ENCODE measurements at regions of chr21 and their contacts with region 1.

Region 1: DNA sequence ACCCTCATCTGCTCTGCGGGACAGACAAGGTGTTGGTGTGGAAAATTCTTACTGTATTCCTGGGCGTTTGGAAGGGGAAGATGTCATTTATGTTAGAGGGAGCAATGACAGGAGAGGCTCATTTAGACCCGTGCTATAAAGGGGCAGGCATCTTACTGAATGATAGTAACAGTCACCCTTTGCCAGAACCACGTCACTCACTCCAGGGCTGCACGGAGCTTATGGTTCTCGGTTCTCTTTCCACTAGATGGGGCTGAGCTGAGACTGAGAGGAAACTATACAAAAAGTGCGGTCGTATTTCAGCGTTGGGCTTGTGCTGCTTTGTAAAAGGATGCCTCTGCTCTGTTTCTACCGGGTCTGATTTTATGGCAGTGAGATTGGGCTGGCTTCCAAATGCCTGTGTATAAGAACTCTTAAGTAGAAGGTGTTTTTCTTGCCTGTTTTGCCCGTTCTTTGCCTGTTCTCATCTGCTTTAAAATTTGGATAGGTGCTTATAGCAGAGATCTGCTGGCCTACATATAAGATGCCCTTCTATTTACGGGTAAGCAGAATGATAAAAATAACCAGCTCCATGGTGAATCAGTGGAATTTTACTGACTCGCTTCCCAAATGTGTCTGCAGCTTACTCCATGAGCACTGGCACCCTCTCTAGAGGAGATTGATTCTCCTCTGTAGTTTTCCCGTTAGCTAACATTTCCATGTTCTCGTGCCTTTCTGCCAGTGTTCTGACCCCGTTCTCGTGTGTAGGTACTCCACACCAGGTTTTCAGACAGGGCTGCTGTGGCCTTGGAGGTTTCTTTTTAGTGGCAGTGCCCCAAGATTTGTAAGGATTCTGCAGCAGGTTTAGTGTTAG is 55.9 kb downstream of the MRPS6 start:
- DNase-seq: peak; percentile 17 to 84 (median 64)
- ATAC-seq: peak; percentile 92
- H3K4me3 ChIP-seq: peak overlapping the region in 1 of 2 experiments; percentile 25
- H3K4me3 Mint-ChIP-seq: peak overlapping the region; percentile 58
- H3K27ac ChIP-seq: peak overlapping the region; percentile 28 to 48
- H3K27ac Mint-ChIP-seq: peak overlapping the region; percentile 88
- H3K4me1 ChIP-seq: peaks cover 69% of the 10 kb centered on the region
- H3K4me1 Mint-ChIP-seq: peaks cover 93% of the 10 kb centered on the region
- H3K27me3 ChIP-seq: no peaks in the 10 kb centered on the region
- H3K27me3 Mint-ChIP-seq: no peaks in the 10 kb centered on the region
- CTCF ChIP-seq: peak; percentile 47

Region 2: DNA sequence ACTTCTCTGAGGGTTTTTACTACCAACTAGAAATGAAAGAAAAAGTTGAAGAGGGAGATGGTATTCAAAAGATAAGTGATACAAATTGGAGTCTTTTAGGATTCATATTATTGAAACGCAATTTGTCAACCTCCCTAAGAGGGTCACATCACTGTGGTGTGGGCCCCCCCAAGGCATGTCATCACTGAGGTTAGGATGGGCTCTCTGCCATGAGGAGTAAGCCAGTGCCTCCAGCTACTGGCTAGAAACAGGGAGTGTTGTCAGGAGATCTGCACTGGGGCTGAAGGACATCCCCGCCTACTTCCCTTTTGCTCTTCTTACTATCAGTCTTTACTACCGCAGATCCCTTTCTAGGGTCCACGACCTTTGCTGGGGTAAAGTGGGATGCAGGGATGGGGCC is 461.1 kb before region 1 on chr21:
- CTCF ChIA-PET with region 1: no interaction called
- POLR2A ChIA-PET with region 1: no interaction called
- intact Hi-C with region 1: no loop called
- DNase-seq: no peak
- ATAC-seq: no peak
- H3K4me3 ChIP-seq: no peak overlapping the region
- H3K4me3 Mint-ChIP-seq: no peak overlapping the region
- H3K27ac ChIP-seq: no peak overlapping the region
- H3K27ac Mint-ChIP-seq: no peak overlapping the region
- H3K4me1 ChIP-seq: no peaks in the 10 kb centered on the region
- H3K4me1 Mint-ChIP-seq: no peaks in the 10 kb centered on the region
- H3K27me3 ChIP-seq: no peaks in the 10 kb centered on the region
- H3K27me3 Mint-ChIP-seq: peaks cover 4% of the 10 kb centered on the region
- CTCF ChIP-seq: no peak

Region 3: DNA sequence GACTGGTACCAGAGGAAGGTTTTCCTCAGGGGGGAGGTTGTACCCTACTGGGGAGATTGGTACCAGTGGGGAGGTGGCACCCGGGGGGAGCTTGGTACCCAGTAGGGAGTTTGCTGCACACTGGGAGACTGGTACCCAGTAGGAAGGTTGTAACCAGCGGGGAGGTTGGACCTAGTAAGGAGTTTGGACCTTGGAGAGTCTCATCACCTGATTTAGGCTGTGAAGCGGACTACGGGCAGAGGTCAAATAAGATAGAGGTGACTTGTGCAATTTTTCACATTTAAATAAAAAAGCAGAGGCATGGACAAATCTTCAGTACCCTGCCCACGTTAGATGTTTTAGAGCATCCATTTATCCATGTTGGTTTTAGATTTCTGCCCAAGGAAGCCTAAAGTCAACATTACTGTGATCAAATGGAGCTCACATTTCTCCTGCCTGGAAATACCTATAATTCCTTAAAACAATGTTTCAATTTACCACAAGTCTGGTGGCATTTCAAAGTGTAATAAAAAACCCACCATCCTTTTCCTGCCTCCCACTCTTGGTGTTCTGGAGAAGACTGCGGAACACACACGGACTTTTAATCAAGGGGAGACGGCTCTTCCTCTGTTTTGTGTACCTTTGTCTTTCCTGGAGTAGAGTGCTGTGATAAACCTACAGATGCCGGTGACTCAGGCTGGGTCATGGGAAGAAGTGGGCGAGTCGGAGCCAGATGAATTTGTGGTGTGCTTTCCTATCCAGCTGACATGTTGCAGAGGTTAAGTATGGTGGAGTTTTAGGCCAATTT is 92.1 kb before region 1 on chr21:
- CTCF ChIA-PET with region 1: no interaction called
- POLR2A ChIA-PET with region 1: no interaction called
- intact Hi-C with region 1: no loop called
- DNase-seq: no peak
- ATAC-seq: no peak
- H3K4me3 ChIP-seq: no peak overlapping the region
- H3K4me3 Mint-ChIP-seq: no peak overlapping the region
- H3K27ac ChIP-seq: no peak overlapping the region
- H3K27ac Mint-ChIP-seq: no peak overlapping the region
- H3K4me1 ChIP-seq: no peaks in the 10 kb centered on the region
- H3K4me1 Mint-ChIP-seq: no peaks in the 10 kb centered on the region
- H3K27me3 ChIP-seq: no peaks in the 10 kb centered on the region
- H3K27me3 Mint-ChIP-seq: no peaks in the 10 kb centered on the region
- CTCF ChIP-seq: no peak

Region 4: DNA sequence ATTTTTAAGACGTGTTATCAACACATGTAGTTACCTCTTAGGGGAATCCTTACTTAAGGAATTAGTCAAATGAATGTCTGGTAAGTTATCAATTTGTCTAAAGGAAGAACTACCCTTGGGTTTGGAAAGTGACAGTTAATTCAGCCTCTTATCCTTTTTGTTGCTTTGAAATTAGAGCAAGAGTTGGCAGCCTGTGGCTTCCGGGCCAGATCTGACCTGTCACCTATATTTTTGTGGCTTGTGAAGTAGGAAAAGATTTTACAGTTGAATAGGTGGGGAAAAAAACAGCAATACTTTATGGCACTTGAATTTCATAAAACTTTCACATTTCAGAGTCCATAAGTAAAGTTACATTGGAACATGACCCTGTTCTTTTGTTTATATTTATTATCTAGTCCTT is 50.4 kb before region 1 on chr21:
- CTCF ChIA-PET with region 1: interaction called, 3 read pairs
- POLR2A ChIA-PET with region 1: no interaction called
- intact Hi-C with region 1: loop called (anchors 2 to 5 kb)
- DNase-seq: peak in 5 of 9 experiments; percentile 22 to 56 (median 34)
- ATAC-seq: no peak
- H3K4me3 ChIP-seq: no peak overlapping the region
- H3K4me3 Mint-ChIP-seq: peak overlapping the region; percentile 49
- H3K27ac ChIP-seq: peak overlapping the region in 1 of 2 experiments; percentile 17
- H3K27ac Mint-ChIP-seq: peak overlapping the region; percentile 46
- H3K4me1 ChIP-seq: peaks cover 85% of the 10 kb centered on the region
- H3K4me1 Mint-ChIP-seq: peaks cover 95% of the 10 kb centered on the region
- H3K27me3 ChIP-seq: no peaks in the 10 kb centered on the region
- H3K27me3 Mint-ChIP-seq: no peaks in the 10 kb centered on the region
- CTCF ChIP-seq: no peak

Region 5: DNA sequence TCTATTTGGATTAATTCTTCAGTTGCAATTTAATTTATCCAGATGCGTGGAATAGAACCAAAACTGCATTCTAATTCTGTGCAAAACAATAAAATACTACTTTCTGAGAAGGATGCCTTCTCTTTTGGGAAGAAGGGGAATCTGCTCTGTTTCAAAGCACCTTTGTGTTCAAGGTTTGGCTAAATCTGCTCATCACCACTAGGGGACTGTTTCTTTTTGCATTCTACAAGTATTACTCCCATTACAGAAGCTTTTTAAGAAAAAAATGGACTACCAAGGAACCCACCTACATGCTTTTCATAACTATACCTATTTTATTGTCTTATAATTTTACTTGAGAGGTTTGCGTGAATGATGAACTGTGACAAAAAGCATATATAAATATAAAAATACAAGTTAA is 37.7 kb before region 1 on chr21:
- CTCF ChIA-PET with region 1: interaction called, 5 read pairs
- POLR2A ChIA-PET with region 1: no interaction called
- intact Hi-C with region 1: loop called in 1 of 2 experiments (anchors 2 kb)
- DNase-seq: peak in 2 of 9 experiments; percentile 17 to 26
- ATAC-seq: no peak
- H3K4me3 ChIP-seq: no peak overlapping the region
- H3K4me3 Mint-ChIP-seq: no peak overlapping the region
- H3K27ac ChIP-seq: no peak overlapping the region
- H3K27ac Mint-ChIP-seq: peak overlapping the region; percentile 4
- H3K4me1 ChIP-seq: peaks cover 61% of the 10 kb centered on the region
- H3K4me1 Mint-ChIP-seq: peaks cover 63% of the 10 kb centered on the region
- H3K27me3 ChIP-seq: no peaks in the 10 kb centered on the region
- H3K27me3 Mint-ChIP-seq: no peaks in the 10 kb centered on the region
- CTCF ChIP-seq: peak; percentile 47

Region 6: GRCh38 chr21:34202553-34203372 is 73.5 kb after region 1 on chr21:
- CTCF ChIA-PET with region 1: interaction called, 5 read pairs
- POLR2A ChIA-PET with region 1: no interaction called
- intact Hi-C with region 1: loop called (anchors 1 kb)
- DNase-seq: no peak
- ATAC-seq: no peak
- H3K4me3 ChIP-seq: peak overlapping the region; percentile 46 to 56
- H3K4me3 Mint-ChIP-seq: peak overlapping the region; percentile 81
- H3K27ac ChIP-seq: no peak overlapping the region
- H3K27ac Mint-ChIP-seq: no peak overlapping the region
- H3K4me1 ChIP-seq: peaks cover 30% of the 10 kb centered on the region
- H3K4me1 Mint-ChIP-seq: peaks cover 41% of the 10 kb centered on the region
- H3K27me3 ChIP-seq: no peaks in the 10 kb centered on the region
- H3K27me3 Mint-ChIP-seq: no peaks in the 10 kb centered on the region
- CTCF ChIP-seq: no peak

Region 7: GRCh38 chr21:34276711-34277425 is 147.6 kb after region 1 on chr21:
- CTCF ChIA-PET with region 1: no interaction called
- POLR2A ChIA-PET with region 1: no interaction called
- intact Hi-C with region 1: no loop called
- DNase-seq: no peak
- ATAC-seq: no peak
- H3K4me3 ChIP-seq: no peak overlapping the region
- H3K4me3 Mint-ChIP-seq: no peak overlapping the region
- H3K27ac ChIP-seq: no peak overlapping the region
- H3K27ac Mint-ChIP-seq: no peak overlapping the region
- H3K4me1 ChIP-seq: no peaks in the 10 kb centered on the region
- H3K4me1 Mint-ChIP-seq: no peaks in the 10 kb centered on the region
- H3K27me3 ChIP-seq: no peaks in the 10 kb centered on the region
- H3K27me3 Mint-ChIP-seq: peaks cover 7% of the 10 kb centered on the region
- CTCF ChIP-seq: no peak

Region 8: GRCh38 chr21:34345091-34345871 is 216.0 kb after region 1 on chr21:
- CTCF ChIA-PET with region 1: interaction called, 17 read pairs
- POLR2A ChIA-PET with region 1: no interaction called
- intact Hi-C with region 1: loop called (anchors 1 to 2 kb)
- DNase-seq: no peak
- ATAC-seq: no peak
- H3K4me3 ChIP-seq: no peak overlapping the region
- H3K4me3 Mint-ChIP-seq: no peak overlapping the region
- H3K27ac ChIP-seq: no peak overlapping the region
- H3K27ac Mint-ChIP-seq: no peak overlapping the region
- H3K4me1 ChIP-seq: no peaks in the 10 kb centered on the region
- H3K4me1 Mint-ChIP-seq: peaks cover 5% of the 10 kb centered on the region
- H3K27me3 ChIP-seq: no peaks in the 10 kb centered on the region
- H3K27me3 Mint-ChIP-seq: no peaks in the 10 kb centered on the region
- CTCF ChIP-seq: no peak

Region 9: DNA sequence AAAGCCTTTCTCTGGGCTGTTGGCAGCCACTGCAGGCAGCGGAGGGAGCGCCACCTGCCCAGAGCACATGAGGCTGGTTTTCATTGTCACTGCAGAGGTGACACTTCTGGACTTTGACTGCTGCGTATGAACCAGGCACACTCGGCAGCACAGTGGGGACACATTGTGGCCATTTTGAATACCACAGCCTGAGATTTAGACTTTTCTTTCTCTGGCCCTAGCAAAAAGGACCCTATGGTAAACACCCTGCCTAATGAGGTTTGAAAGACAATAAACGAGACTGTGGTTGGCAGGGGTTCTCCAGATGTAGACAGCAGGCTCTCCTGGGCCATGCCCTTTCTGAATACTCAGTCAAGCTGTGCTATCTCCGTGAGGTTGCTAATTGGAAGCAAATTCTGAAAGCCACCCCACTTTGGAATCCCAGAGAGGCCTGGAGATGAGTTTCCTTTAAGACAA is 222.5 kb after region 1 on chr21:
- CTCF ChIA-PET with region 1: interaction called, 17 read pairs
- POLR2A ChIA-PET with region 1: no interaction called
- intact Hi-C with region 1: loop called (anchors 1 to 2 kb)
- DNase-seq: peak in 3 of 9 experiments; percentile 9 to 56 (median 41)
- ATAC-seq: peak; percentile 63
- H3K4me3 ChIP-seq: no peak overlapping the region
- H3K4me3 Mint-ChIP-seq: no peak overlapping the region
- H3K27ac ChIP-seq: no peak overlapping the region
- H3K27ac Mint-ChIP-seq: no peak overlapping the region
- H3K4me1 ChIP-seq: no peaks in the 10 kb centered on the region
- H3K4me1 Mint-ChIP-seq: peaks cover 10% of the 10 kb centered on the region
- H3K27me3 ChIP-seq: no peaks in the 10 kb centered on the region
- H3K27me3 Mint-ChIP-seq: peaks cover 18% of the 10 kb centered on the region
- CTCF ChIP-seq: no peak

Region 10: GRCh38 chr21:34614633-34615486 is 485.6 kb after region 1 on chr21 and contains the start of gene RCAN1:
- CTCF ChIA-PET with region 1: no interaction called
- POLR2A ChIA-PET with region 1: no interaction called
- intact Hi-C with region 1: loop called in 1 of 2 experiments (anchors 10 kb)
- DNase-seq: peak; percentile 64 to 94 (median 85)
- ATAC-seq: peak; percentile 95
- H3K4me3 ChIP-seq: peak within 1 kb of the TSS; percentile 51 to 63
- H3K4me3 Mint-ChIP-seq: peak within 1 kb of the TSS; percentile 90
- H3K27ac ChIP-seq: peak within 1 kb of the TSS; percentile 41 to 68
- H3K27ac Mint-ChIP-seq: peak within 1 kb of the TSS; percentile 91
- H3K4me1 ChIP-seq: peaks cover 13% of the 10 kb centered on the region
- H3K4me1 Mint-ChIP-seq: peaks cover 21% of the 10 kb centered on the region
- H3K27me3 ChIP-seq: no peaks in the 10 kb centered on the region
- H3K27me3 Mint-ChIP-seq: no peaks in the 10 kb centered on the region
- CTCF ChIP-seq: no peak
- total RNA-seq, gene RCAN1: 0.73 to 1.0 TPM

Measured in CD8-positive, alpha-beta T cell (primary cell).